ENCODE measurements at regions of chr12 and their contacts with region 1.

Region 1: GRCh38 chr12:122190842-122191668 is 8.1 kb downstream of the LRRC43 start:
- DNase-seq: peak; percentile 90
- ATAC-seq: peak; percentile 97
- H3K4me3 ChIP-seq: no peak overlapping the region
- H3K27ac ChIP-seq: no peak overlapping the region
- H3K4me1 ChIP-seq: no peaks in the 10 kb centered on the region
- H3K27me3 ChIP-seq: no peaks in the 10 kb centered on the region
- CTCF ChIP-seq: peak; percentile 95

Region 2: DNA sequence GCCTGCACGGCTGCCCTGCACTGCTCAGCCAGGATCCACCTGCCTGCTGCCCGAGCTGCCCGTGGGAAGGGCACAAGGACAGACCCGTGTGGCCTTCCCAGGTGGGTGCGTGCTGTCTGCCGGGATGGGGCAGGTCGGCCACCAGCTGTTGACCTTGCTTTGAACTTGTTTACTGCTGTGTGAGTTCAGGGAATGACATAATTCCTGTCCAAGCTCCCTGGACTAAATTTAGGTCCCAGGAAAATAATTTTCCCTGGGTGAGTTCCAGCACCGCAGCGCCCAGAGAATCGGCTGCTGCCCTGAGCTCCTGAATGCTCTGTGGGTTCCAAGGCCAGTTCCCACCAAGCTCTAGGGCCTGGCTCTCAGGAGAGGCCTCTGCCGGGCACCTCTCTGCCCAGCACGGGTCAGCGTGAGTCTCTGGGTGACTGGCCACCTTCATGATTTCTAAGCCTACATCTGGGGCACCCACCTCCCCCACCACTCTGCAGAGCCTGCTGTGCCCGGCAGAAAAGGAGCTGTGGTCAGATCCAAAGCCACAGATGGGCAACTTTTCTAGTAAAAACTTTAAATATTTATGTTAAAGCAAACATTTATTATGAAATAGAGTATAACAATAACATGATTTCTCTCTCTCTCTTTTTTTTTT is 139.7 kb before region 1 on chr12:
- CTCF ChIA-PET with region 1: no interaction called
- POLR2A ChIA-PET with region 1: interaction called, 12 read pairs
- intact Hi-C with region 1: loop called (anchors 1 kb)
- DNase-seq: no peak
- ATAC-seq: no peak
- H3K4me3 ChIP-seq: no peak overlapping the region
- H3K27ac ChIP-seq: no peak overlapping the region
- H3K4me1 ChIP-seq: no peaks in the 10 kb centered on the region
- H3K27me3 ChIP-seq: no peaks in the 10 kb centered on the region
- CTCF ChIP-seq: no peak

Region 3: GRCh38 chr12:122152754-122153153 is 38.3 kb before region 1 on chr12:
- CTCF ChIA-PET with region 1: no interaction called
- POLR2A ChIA-PET with region 1: no interaction called
- intact Hi-C with region 1: loop called (anchors 5 kb)
- DNase-seq: no peak
- ATAC-seq: no peak
- H3K4me3 ChIP-seq: no peak overlapping the region
- H3K27ac ChIP-seq: no peak overlapping the region
- H3K4me1 ChIP-seq: no peaks in the 10 kb centered on the region
- H3K27me3 ChIP-seq: no peaks in the 10 kb centered on the region
- CTCF ChIP-seq: no peak

Region 4: GRCh38 chr12:122166422-122167349 is 24.4 kb before region 1 on chr12:
- CTCF ChIA-PET with region 1: no interaction called
- POLR2A ChIA-PET with region 1: no interaction called
- intact Hi-C with region 1: no loop called
- DNase-seq: no peak
- ATAC-seq: no peak
- H3K4me3 ChIP-seq: no peak overlapping the region
- H3K27ac ChIP-seq: no peak overlapping the region
- H3K4me1 ChIP-seq: no peaks in the 10 kb centered on the region
- H3K27me3 ChIP-seq: no peaks in the 10 kb centered on the region
- CTCF ChIP-seq: no peak

Region 5: GRCh38 chr12:122244565-122245371 is 53.7 kb after region 1 on chr12:
- CTCF ChIA-PET with region 1: no interaction called
- POLR2A ChIA-PET with region 1: no interaction called
- intact Hi-C with region 1: no loop called
- DNase-seq: no peak
- ATAC-seq: no peak
- H3K4me3 ChIP-seq: no peak overlapping the region
- H3K27ac ChIP-seq: no peak overlapping the region
- H3K4me1 ChIP-seq: no peaks in the 10 kb centered on the region
- H3K27me3 ChIP-seq: no peaks in the 10 kb centered on the region
- CTCF ChIP-seq: no peak